ENCODE measurements at regions of chr12 and their contacts with region 1.

Region 1: GRCh38 chr12:56688129-56688845 is at the start of gene PTGES3:
- DNase-seq: peak; percentile 94

Region 2: GRCh38 chr12:56616244-56616643 is 72.0 kb before region 1 on chr12:
- CTCF ChIA-PET with region 1: no interaction called
- POLR2A ChIA-PET with region 1: no interaction called
- DNase-seq: no peak

Region 3: GRCh38 chr12:56636675-56637540 is 51.4 kb before region 1 on chr12:
- CTCF ChIA-PET with region 1: interaction called, 31 read pairs
- POLR2A ChIA-PET with region 1: interaction called, 42 read pairs
- DNase-seq: peak; percentile 92

Region 4: GRCh38 chr12:56670836-56671235 is 17.5 kb before region 1 on chr12:
- CTCF ChIA-PET with region 1: interaction called, 3 read pairs
- POLR2A ChIA-PET with region 1: interaction called, 39 read pairs
- DNase-seq: no peak

Region 5: GRCh38 chr12:56699020-56699661 is 10.9 kb after region 1 on chr12:
- CTCF ChIA-PET with region 1: interaction called, 3 read pairs
- POLR2A ChIA-PET with region 1: interaction called, 11 read pairs
- DNase-seq: no peak

Region 6: GRCh38 chr12:56716458-56716857 is 28.2 kb after region 1 on chr12:
- CTCF ChIA-PET with region 1: interaction called, 4 read pairs
- POLR2A ChIA-PET with region 1: interaction called, 18 read pairs
- DNase-seq: no peak

Measured in HEK293T (cell line).